GM12878 (cell line): ENCODE measurements at regions of chr16 and their contacts with region 1.

Region 1: GRCh38 chr16:17277977-17278381 is 192.8 kb downstream of the XYLT1 start:
- DNase-seq: no peak
- ATAC-seq: peak; percentile 77
- H3K4me3 ChIP-seq: no peak overlapping the region
- H3K27ac ChIP-seq: no peak overlapping the region
- H3K4me1 ChIP-seq: peaks cover 39% of the 10 kb centered on the region
- H3K27me3 ChIP-seq: no peaks in the 10 kb centered on the region
- CTCF ChIP-seq: peak; percentile 59 to 66 (median 62); a peak in 5 of 6 replicates
- EP300 ChIP-seq: no peak
- POLR2A ChIP-seq: no peak
- RAD21 ChIP-seq: peak; percentile 70

Region 2: DNA sequence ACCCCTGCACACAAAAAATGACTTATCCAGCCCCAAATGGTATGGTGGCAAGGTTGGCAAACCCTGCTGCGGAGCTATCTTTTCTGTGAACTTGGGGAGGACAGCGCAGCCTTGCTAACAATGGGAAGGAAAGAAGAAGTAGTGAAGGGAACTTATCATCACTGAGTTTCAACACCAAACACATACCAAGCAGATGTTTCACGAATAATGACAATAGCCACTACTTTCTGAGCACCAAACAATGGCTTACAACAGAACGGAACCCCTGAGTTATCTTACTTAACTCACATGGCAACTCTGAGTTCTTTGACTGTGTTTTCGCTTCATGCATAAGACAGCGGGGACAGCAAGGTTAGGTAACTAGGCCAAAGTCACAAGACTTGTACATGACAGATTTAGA is 43.8 kb after region 1 on chr16:
- CTCF ChIA-PET with region 1: interaction called, 5 read pairs
- POLR2A ChIA-PET with region 1: no interaction called
- RAD21 ChIA-PET with region 1: interaction called, 4 read pairs
- SMC1A ChIA-PET with region 1: interaction called, 3 read pairs
- in situ Hi-C with region 1: loop called (anchors 5 kb)
- intact Hi-C with region 1: no loop called
- DNase-seq: no peak
- ATAC-seq: no peak
- H3K4me3 ChIP-seq: no peak overlapping the region
- H3K27ac ChIP-seq: no peak overlapping the region
- H3K4me1 ChIP-seq: no peaks in the 10 kb centered on the region; the same call in 1 of the 2 replicates
- H3K27me3 ChIP-seq: no peaks in the 10 kb centered on the region
- CTCF ChIP-seq: no peak
- EP300 ChIP-seq: no peak
- POLR2A ChIP-seq: no peak
- RAD21 ChIP-seq: no peak

Region 3: DNA sequence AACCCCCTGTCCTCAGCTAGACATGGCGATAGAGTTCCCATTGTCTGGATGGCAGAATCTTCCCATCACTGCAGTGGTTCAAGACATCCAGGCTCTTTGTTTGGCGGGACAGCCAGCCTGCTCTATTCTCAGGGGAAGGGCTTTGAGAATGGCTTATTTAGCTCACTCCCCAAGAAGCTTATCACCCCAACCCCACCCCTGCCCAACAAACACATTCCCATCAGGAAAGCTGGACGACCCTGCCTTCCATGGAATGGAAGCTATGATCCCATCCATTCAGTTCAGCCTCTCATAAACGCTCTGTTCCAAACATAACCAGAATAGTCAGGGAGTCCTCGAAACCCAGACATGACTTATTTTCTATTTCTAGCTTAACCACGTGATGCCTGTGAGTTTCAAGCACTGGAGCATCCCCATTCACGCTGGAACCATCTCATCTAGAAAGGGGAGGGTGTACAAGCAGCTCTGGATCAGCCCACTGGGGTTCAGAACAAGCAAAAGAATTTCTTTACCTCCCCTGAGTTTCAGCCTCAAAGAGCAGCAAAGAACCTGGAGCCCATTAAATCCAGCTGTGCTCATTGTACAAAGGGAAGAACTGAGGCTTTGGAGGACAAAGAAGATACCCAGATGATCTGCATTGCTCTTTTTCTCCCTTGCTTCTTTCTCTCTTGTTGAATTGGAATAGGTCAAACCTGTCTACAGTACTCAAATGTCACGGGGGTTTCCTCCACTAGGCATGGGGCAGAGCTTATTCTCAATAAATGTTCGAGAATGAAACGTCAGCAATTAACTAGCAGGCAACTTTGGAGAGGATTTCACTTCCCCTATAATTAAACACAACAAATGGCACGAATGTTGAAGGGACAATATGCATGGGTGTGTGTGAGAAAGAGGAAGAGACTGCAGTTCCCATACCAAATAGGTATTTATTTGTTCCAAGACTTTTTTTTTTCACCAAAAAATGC is 99.7 kb after region 1 on chr16:
- CTCF ChIA-PET with region 1: interaction called, 10 read pairs
- POLR2A ChIA-PET with region 1: interaction called, 3 read pairs
- RAD21 ChIA-PET with region 1: interaction called, 7 read pairs
- SMC1A ChIA-PET with region 1: interaction called, 26 read pairs
- in situ Hi-C with region 1: no loop called
- intact Hi-C with region 1: no loop called
- DNase-seq: peak; percentile 80
- ATAC-seq: peak; percentile 90
- H3K4me3 ChIP-seq: 0 out of 2 replicates have a peak overlapping the region, but pooled peaks have one; percentile 43
- H3K27ac ChIP-seq: peak overlapping the region; percentile 72
- H3K4me1 ChIP-seq: peaks cover 35% of the 10 kb centered on the region
- H3K27me3 ChIP-seq: no peaks in the 10 kb centered on the region
- CTCF ChIP-seq: no peak
- EP300 ChIP-seq: peak; percentile 84 to 91; a peak in 2 of 4 replicates
- POLR2A ChIP-seq: no peak
- RAD21 ChIP-seq: peak; percentile 21; the same call in 1 of the 2 replicates

Region 4: DNA sequence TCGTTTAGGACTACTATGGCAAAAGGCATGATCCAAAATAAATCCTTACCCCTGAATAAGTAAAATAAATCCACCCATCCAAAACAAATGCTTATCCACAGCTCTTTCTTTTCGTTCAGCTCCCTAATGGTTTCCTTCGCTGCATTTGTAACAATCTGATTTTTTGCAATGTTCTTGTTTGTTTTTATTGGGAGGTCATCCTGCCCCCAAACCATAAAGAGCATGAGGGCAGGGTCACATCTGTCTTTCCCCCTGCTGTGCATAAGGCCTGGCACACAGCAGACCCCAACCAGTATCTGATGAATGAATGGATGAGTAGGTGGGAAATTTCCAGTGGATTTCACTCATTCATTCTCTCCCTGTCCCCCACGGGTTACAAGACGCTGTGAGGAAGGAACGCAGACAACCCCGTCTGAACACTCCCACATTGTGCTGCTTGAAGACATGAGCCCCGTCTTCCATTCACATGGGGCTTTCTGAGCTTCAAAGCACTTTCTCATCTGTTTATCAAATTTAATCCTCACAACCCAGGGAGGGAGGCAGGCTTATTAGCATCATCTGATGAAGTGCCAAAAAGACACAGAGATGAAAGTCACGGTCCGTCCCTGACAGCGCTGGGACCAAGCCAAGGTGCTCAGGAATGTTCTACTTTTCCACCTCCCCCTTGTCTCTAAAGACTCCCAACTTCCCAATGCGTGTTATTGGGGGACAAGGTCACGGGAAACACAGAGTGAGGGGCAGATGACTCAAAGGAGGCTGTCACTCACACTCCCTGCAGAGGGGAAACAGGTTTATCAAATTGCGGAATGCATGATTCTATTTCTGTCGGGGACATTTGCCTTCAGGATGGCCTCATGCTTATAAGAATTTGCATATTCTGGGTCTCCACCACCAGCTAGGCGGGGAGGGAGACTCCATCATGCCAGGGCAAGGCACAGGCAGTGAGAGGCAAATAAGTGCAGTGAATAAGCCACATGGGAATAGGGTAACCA is 181.8 kb after region 1 on chr16:
- CTCF ChIA-PET with region 1: interaction called, 7 read pairs
- POLR2A ChIA-PET with region 1: interaction called, 5 read pairs
- RAD21 ChIA-PET with region 1: interaction called, 8 read pairs
- SMC1A ChIA-PET with region 1: interaction called, 73 read pairs
- in situ Hi-C with region 1: no loop called
- intact Hi-C with region 1: loop called (anchors 5 kb)
- DNase-seq: no peak
- ATAC-seq: peak; percentile 72
- H3K4me3 ChIP-seq: no peak overlapping the region; the same call in 1 of the 2 replicates
- H3K27ac ChIP-seq: no peak overlapping the region
- H3K4me1 ChIP-seq: peaks cover 40% of the 10 kb centered on the region
- H3K27me3 ChIP-seq: no peaks in the 10 kb centered on the region
- CTCF ChIP-seq: no peak
- EP300 ChIP-seq: no peak
- POLR2A ChIP-seq: no peak
- RAD21 ChIP-seq: no peak

Region 5: GRCh38 chr16:17497648-17498047 is 219.7 kb after region 1 on chr16:
- CTCF ChIA-PET with region 1: no interaction called
- POLR2A ChIA-PET with region 1: no interaction called
- RAD21 ChIA-PET with region 1: no interaction called
- SMC1A ChIA-PET with region 1: no interaction called
- in situ Hi-C with region 1: no loop called
- intact Hi-C with region 1: no loop called
- DNase-seq: no peak
- ATAC-seq: no peak
- H3K4me3 ChIP-seq: no peak overlapping the region
- H3K27ac ChIP-seq: no peak overlapping the region
- H3K4me1 ChIP-seq: no peaks in the 10 kb centered on the region
- H3K27me3 ChIP-seq: 0 out of 4 replicates have a peak, but pooled peaks cover 0 to 2% of the 10 kb centered on the region in 2 experiments
- CTCF ChIP-seq: no peak
- EP300 ChIP-seq: no peak
- POLR2A ChIP-seq: no peak
- RAD21 ChIP-seq: no peak